ENCODE measurements at regions of chr1 and their contacts with region 1.

Region 1: GRCh38 chr1:66331657-66332547 is 202.1 kb upstream of the SGIP1 start:
- DNase-seq: peak; percentile 62
- ATAC-seq: peak; percentile 3
- H3K4me3 ChIP-seq: peak overlapping the region; percentile 69 to 100 (median 90)
- H3K4me3 Mint-ChIP-seq: peak overlapping the region; percentile 99
- H3K27ac ChIP-seq: peak overlapping the region; percentile 94 to 98
- H3K27ac Mint-ChIP-seq: peak overlapping the region; percentile 97
- H3K4me1 ChIP-seq: peaks cover 45 to 58% of the 10 kb centered on the region in 2 donors
- H3K4me1 Mint-ChIP-seq: peaks cover 56% of the 10 kb centered on the region
- H3K27me3 ChIP-seq: no peaks in the 10 kb centered on the region
- H3K27me3 Mint-ChIP-seq: no peaks in the 10 kb centered on the region
- CTCF ChIP-seq: no peak

Region 2: DNA sequence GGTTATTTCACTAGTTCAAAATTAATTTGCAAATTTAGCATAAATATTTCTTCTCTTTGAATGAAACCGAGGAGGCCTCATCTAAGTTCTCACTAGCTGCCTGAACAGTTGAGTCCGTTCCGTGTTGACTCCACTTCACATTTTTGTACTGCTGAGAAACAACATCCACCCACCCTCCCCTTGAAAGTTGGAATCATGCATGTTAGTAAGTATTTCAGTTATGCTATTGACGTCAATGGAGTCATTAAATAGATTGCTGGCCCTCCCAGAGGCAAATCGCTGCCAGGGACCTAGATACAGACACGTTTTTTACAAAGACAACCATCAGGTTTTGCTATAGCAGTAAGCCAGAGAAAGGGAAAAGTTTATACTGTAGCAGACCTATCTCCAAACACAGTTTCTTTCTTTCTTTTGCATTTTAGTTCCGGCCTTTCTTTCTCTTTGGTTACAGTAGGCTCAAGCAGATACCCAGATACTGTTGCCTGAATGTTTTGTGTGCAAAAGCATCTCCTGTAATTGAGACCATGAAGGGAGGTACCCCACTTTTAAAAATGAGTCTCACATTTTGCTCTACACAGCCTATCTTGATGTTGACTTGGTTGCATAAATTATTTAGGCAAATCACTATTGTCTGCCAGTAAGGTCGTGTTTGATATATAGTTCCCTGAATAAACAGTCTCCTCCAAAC is 60.5 kb before region 1 on chr1:
- CTCF ChIA-PET with region 1: interaction called, 8 read pairs
- POLR2A ChIA-PET with region 1: interaction called, 5 read pairs
- intact Hi-C with region 1: loop called (anchors 1 kb)
- DNase-seq: peak; percentile 48
- ATAC-seq: peak; percentile 90
- H3K4me3 ChIP-seq: no peak overlapping the region
- H3K4me3 Mint-ChIP-seq: peak overlapping the region; percentile 81
- H3K27ac ChIP-seq: no peak overlapping the region
- H3K27ac Mint-ChIP-seq: peak overlapping the region; percentile 93
- H3K4me1 ChIP-seq: peaks cover 14 to 21% of the 10 kb centered on the region in 2 donors
- H3K4me1 Mint-ChIP-seq: peaks cover 36% of the 10 kb centered on the region
- H3K27me3 ChIP-seq: no peaks in the 10 kb centered on the region
- H3K27me3 Mint-ChIP-seq: no peaks in the 10 kb centered on the region
- CTCF ChIP-seq: no peak

Region 3: GRCh38 chr1:66300972-66301451 is 30.9 kb before region 1 on chr1:
- CTCF ChIA-PET with region 1: interaction called, 3 read pairs
- POLR2A ChIA-PET with region 1: no interaction called
- intact Hi-C with region 1: loop called (anchors 2 kb)
- DNase-seq: peak; percentile 59
- ATAC-seq: no peak
- H3K4me3 ChIP-seq: peak overlapping the region in 2 of 5 experiments; percentile 20 to 24
- H3K4me3 Mint-ChIP-seq: peak overlapping the region; percentile 73
- H3K27ac ChIP-seq: peak overlapping the region; percentile 21 to 30
- H3K27ac Mint-ChIP-seq: peak overlapping the region; percentile 33
- H3K4me1 ChIP-seq: peaks cover 9 to 21% of the 10 kb centered on the region in 2 donors
- H3K4me1 Mint-ChIP-seq: peaks cover 21% of the 10 kb centered on the region
- H3K27me3 ChIP-seq: no peaks in the 10 kb centered on the region
- H3K27me3 Mint-ChIP-seq: no peaks in the 10 kb centered on the region
- CTCF ChIP-seq: no peak

Region 4: GRCh38 chr1:66350001-66350547 is 18.2 kb after region 1 on chr1:
- CTCF ChIA-PET with region 1: interaction called, 10 read pairs
- POLR2A ChIA-PET with region 1: interaction called, 5 read pairs
- intact Hi-C with region 1: loop called (anchors 2 kb)
- DNase-seq: peak; percentile 82
- ATAC-seq: peak; percentile 78
- H3K4me3 ChIP-seq: peak overlapping the region in 2 of 5 experiments; percentile 4 to 31
- H3K4me3 Mint-ChIP-seq: peak overlapping the region; percentile 88
- H3K27ac ChIP-seq: peak overlapping the region; percentile 74 to 87
- H3K27ac Mint-ChIP-seq: peak overlapping the region; percentile 84
- H3K4me1 ChIP-seq: peaks cover 74 to 94% of the 10 kb centered on the region in 2 donors
- H3K4me1 Mint-ChIP-seq: peaks cover 95% of the 10 kb centered on the region
- H3K27me3 ChIP-seq: no peaks in the 10 kb centered on the region
- H3K27me3 Mint-ChIP-seq: no peaks in the 10 kb centered on the region
- CTCF ChIP-seq: no peak

Region 5: DNA sequence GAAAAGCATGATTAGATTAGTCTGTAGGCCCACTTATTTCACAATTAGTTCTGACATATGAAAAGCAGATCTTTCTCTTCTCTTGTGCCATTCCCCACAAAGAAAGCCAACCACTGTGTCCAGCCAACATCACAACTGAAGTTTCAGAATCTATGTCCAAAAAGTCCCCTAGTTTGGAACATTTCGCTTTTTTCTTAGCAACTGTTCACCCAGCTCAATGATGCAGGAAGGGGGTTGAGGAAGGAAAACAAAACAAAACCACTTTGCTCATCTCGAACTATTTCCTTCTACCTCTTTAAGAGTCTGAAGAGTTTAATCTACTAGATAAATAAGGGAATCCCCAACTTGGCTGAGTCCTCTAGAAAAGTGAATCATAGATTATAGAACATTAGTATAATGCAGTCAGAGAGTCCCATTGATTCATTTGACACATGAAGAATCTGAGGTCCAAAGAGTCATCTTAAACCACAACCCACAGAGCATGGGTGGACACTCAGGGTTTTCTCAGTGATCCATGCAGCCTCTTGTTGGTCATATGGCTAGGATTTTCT is 42.7 kb after region 1 on chr1:
- CTCF ChIA-PET with region 1: interaction called, 14 read pairs
- POLR2A ChIA-PET with region 1: interaction called, 13 read pairs
- intact Hi-C with region 1: loop called (anchors 1 kb)
- DNase-seq: peak; percentile 90
- ATAC-seq: peak; percentile 73
- H3K4me3 ChIP-seq: peak overlapping the region in 1 of 5 experiments; percentile 13
- H3K4me3 Mint-ChIP-seq: peak overlapping the region; percentile 69
- H3K27ac ChIP-seq: peak overlapping the region; percentile 83 to 90
- H3K27ac Mint-ChIP-seq: peak overlapping the region; percentile 81
- H3K4me1 ChIP-seq: peaks cover 82 to 89% of the 10 kb centered on the region in 2 donors
- H3K4me1 Mint-ChIP-seq: peaks cover 86% of the 10 kb centered on the region
- H3K27me3 ChIP-seq: no peaks in the 10 kb centered on the region
- H3K27me3 Mint-ChIP-seq: no peaks in the 10 kb centered on the region
- CTCF ChIP-seq: no peak

Region 6: GRCh38 chr1:66402194-66402593 is 70.3 kb after region 1 on chr1:
- CTCF ChIA-PET with region 1: interaction called, 6 read pairs
- POLR2A ChIA-PET with region 1: interaction called, 4 read pairs
- intact Hi-C with region 1: loop called (anchors 1 kb)
- DNase-seq: peak; percentile 92
- ATAC-seq: peak; percentile 87
- H3K4me3 ChIP-seq: no peak overlapping the region
- H3K4me3 Mint-ChIP-seq: peak overlapping the region; percentile 77
- H3K27ac ChIP-seq: peak overlapping the region; percentile 37 to 76
- H3K27ac Mint-ChIP-seq: peak overlapping the region; percentile 88
- H3K4me1 ChIP-seq: peaks cover 42 to 45% of the 10 kb centered on the region in 2 donors
- H3K4me1 Mint-ChIP-seq: peaks cover 67% of the 10 kb centered on the region
- H3K27me3 ChIP-seq: no peaks in the 10 kb centered on the region
- H3K27me3 Mint-ChIP-seq: no peaks in the 10 kb centered on the region
- CTCF ChIP-seq: no peak

Region 7: DNA sequence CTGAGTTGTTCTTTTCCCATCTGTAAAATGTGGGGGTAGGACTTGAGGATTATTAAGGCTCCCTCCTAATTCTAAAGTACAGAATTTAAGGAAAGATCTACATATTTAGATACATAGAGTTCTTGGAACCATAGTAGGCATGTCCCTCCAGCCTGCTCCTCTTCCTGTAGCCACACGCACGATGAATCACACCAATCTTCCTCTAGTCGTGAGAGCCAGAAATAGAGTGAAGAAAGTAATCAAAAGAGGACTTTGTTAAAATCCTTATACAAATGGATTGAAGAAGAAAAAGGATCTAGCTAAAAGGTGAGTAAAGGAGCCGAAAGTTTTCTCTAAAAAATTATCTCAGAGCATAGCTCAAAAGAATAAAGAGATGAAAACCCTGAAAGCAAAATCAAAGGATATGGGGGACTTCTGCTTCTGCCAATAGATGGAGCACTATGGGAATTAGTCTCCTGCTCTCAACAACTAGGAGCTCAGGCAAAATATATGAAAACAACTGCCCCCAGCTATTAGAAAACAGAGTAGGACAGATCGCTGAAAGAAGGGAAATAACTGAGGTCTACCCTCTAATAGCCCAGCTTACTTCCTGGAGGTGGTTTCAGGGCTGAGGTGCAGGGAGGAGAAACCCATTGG is 794.3 kb after region 1 on chr1:
- CTCF ChIA-PET with region 1: no interaction called
- POLR2A ChIA-PET with region 1: no interaction called
- intact Hi-C with region 1: no loop called
- DNase-seq: no peak
- ATAC-seq: no peak
- H3K4me3 ChIP-seq: no peak overlapping the region
- H3K4me3 Mint-ChIP-seq: no peak overlapping the region
- H3K27ac ChIP-seq: no peak overlapping the region
- H3K27ac Mint-ChIP-seq: no peak overlapping the region
- H3K4me1 ChIP-seq: no peaks in the 10 kb centered on the region
- H3K4me1 Mint-ChIP-seq: no peaks in the 10 kb centered on the region
- H3K27me3 ChIP-seq: no peaks in the 10 kb centered on the region
- H3K27me3 Mint-ChIP-seq: no peaks in the 10 kb centered on the region
- CTCF ChIP-seq: no peak

Measured in B cell (primary cell).